ENCODE measurements at regions of chr20 and their contacts with region 1.

Region 1: DNA sequence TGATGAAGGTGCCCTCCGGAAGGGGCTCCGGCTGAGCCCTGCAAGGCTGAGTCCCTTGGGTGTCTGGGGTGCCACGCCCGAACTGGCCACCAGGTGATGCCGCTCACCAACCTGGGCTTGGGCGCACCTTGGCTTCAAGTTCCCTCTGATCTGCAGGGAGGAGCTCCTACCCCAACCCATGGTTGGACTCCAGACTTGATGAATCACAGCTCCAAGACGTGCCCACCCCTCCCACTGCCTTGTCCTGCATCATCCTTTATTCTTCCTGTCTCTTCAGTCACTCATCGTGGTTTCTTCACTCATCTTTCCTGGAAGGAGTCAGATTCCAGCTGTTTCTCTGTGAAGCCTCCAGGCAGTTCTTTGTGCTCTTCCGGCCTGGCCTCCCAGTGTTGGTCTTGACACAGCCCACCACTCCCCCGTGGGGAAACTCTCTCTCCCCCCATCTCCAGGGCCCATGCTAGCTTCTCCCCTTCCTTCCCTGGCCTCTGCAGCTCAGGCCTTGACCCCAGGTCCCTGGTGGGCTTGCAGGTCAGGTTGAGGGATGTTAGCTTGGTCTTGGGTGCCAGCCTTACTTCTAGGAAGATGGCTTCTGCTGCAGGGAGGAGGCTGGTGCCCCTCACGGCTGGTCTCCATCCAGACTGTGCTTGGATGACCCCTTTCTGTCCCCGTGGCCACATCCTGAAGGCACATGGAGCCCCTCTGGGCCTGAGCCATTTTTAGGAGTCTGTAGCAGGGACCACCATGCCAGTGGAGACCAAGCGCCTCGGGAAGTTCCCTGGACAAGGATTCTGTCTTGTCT is 2.6 kb upstream of the ZBP1 start:
- DNase-seq: peak; percentile 38 to 90
- H3K4me3 ChIP-seq: no peak overlapping the region
- H3K27ac ChIP-seq: no peak overlapping the region
- H3K4me1 ChIP-seq: no peaks in the 10 kb centered on the region
- H3K27me3 ChIP-seq: no peaks in the 10 kb centered on the region
- CTCF ChIP-seq: peak; percentile 93 to 98 (median 95)
- EP300 ChIP-seq: no peak
- POLR2A ChIP-seq: no peak
- RAD21 ChIP-seq: peak; percentile 96 to 97

Region 2: GRCh38 chr20:57414867-57415592 is 207.7 kb before region 1 on chr20:
- CTCF ChIA-PET with region 1: no interaction called
- POLR2A ChIA-PET with region 1: no interaction called
- DNase-seq: no peak
- H3K4me3 ChIP-seq: no peak overlapping the region
- H3K27ac ChIP-seq: no peak overlapping the region
- H3K4me1 ChIP-seq: no peaks in the 10 kb centered on the region
- H3K27me3 ChIP-seq: no peaks in the 10 kb centered on the region
- CTCF ChIP-seq: no peak
- EP300 ChIP-seq: no peak
- POLR2A ChIP-seq: no peak
- RAD21 ChIP-seq: no peak

Region 3: DNA sequence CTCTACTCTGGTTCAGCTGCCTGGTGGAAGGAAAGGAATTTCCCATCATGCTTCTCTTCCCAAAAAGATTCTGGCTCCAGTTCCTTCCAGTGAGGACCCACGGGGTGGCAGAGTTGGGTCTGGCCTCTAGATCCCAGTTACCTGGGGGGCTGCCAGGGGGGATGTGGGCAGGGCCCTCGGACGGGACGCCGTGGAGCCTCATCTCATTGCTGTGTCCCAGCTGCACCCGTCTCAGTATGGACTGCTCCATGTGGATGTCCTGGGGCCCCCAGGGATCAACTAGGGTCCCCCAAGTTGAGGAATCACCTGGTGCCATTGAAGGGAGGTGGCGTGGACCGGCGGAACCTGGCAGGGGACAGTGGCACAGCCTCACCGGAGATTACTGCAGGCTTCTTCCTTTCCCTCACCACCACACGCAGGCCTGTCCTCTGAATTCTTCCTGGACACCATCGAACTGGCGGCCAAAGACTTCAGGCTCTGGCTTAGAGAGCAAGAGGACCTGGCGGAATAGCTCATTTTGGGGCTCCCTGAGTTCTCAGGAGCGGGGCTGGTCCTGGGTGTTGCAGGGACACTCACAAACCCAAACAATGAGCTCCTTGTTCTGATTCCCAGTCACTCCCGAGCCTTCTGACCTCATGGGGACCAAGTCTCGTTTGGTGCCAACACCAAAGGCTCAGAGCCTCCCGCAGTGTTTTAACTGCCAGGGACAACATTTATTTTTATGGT is 11.0 kb before region 1 on chr20:
- CTCF ChIA-PET with region 1: interaction called, 23 read pairs
- POLR2A ChIA-PET with region 1: no interaction called
- DNase-seq: no peak
- H3K4me3 ChIP-seq: no peak overlapping the region
- H3K27ac ChIP-seq: no peak overlapping the region
- H3K4me1 ChIP-seq: peaks cover 0 to 1% (median 0%) of the 10 kb centered on the region in 4 experiments; a peak in 1 of 7 replicates
- H3K27me3 ChIP-seq: no peaks in the 10 kb centered on the region
- CTCF ChIP-seq: no peak
- EP300 ChIP-seq: no peak
- POLR2A ChIP-seq: no peak
- RAD21 ChIP-seq: no peak

Region 4: GRCh38 chr20:57768519-57768918 is 145.7 kb after region 1 on chr20:
- CTCF ChIA-PET with region 1: no interaction called
- POLR2A ChIA-PET with region 1: no interaction called
- DNase-seq: no peak
- H3K4me3 ChIP-seq: no peak overlapping the region
- H3K27ac ChIP-seq: no peak overlapping the region
- H3K4me1 ChIP-seq: peaks cover 0 to 5% (median 3%) of the 10 kb centered on the region in 4 experiments; a peak in 3 of 7 replicates
- H3K27me3 ChIP-seq: no peaks in the 10 kb centered on the region
- CTCF ChIP-seq: no peak
- EP300 ChIP-seq: no peak
- POLR2A ChIP-seq: no peak
- RAD21 ChIP-seq: no peak

Region 5: GRCh38 chr20:58092831-58093230 is 470.1 kb after region 1 on chr20:
- CTCF ChIA-PET with region 1: interaction called, 29 read pairs
- POLR2A ChIA-PET with region 1: no interaction called
- DNase-seq: no peak
- H3K4me3 ChIP-seq: no peak overlapping the region
- H3K27ac ChIP-seq: no peak overlapping the region
- H3K4me1 ChIP-seq: no peaks in the 10 kb centered on the region
- H3K27me3 ChIP-seq: no peaks in the 10 kb centered on the region; a peak in 1 of 7 replicates
- CTCF ChIP-seq: no peak
- EP300 ChIP-seq: no peak
- POLR2A ChIP-seq: no peak
- RAD21 ChIP-seq: no peak